ENCODE measurements at regions of chr2 and their contacts with region 1.

Region 1: DNA sequence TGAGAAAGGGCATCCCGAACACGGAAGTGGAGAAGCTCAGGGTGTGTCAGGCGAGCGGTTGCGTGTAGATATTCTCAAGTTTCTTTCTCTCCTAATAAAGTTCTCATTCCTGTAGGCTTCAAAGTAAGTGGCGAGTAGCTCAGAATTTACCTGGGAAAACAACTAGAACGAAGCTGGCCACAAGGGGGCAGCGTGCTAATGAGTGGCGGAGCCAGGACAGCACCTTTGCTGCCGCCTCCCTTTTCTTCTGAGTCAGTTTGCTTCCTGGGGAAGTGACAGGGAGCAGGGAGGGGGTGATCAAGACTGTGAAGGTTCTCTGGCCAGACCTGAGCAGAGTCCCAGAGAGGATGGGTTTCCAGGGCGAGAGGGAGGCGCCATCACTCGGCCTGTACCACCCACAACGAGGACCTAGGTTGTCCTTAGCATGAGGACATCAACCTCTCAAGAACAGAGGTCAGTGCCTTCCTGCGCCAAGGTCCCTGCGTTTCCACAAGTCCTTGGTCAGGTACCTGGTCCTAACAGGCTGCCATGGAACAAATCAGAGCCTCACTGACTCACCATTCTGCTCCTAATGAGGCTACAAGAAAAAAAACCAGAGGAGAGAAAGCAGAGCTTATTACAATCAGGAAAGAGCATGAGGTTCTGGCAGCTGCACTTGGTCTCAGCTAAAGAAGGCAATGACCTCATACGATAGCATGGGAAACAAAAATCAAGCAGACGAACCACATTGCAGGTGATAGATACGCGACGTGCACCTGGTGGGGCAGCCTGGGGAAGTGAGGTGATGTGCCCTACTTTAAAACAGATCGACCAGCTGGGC is 98.6 kb downstream of the PLB1 start:
- DNase-seq: peak; percentile 85

Region 2: DNA sequence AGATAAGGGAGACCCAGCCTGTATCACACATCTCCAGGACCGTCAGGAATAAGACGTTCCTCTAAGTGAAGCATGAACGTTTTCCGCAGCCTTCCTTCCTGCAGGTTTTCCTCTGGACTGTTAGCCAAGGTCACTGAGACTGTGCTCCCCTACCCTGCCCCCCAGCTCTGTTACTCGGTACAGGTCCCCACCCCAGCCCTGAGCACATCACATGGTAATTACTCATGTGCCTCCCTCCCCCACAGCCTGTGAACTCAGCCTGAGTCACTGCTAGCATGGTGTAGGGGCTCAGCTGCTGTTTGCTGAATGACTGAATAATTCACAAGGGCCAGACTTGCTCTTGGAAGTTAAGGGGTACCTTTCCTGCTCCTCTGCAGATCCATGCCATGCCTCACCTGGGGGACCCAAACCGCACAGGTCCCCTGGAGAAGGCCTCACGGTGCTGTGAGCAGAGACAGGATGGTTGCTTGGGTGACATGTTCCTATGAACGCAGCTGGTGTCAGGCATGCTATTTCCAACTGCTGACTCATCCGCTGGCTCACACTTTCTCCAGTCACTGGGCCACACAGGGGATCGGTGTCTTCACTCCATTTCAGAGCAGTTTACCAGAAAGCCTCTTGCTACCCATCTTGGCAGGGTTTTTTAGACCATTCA is 10.5 kb before region 1 on chr2:
- CTCF ChIA-PET with region 1: interaction called, 12 read pairs
- POLR2A ChIA-PET with region 1: interaction called, 3 read pairs
- DNase-seq: peak; percentile 30

Region 3: DNA sequence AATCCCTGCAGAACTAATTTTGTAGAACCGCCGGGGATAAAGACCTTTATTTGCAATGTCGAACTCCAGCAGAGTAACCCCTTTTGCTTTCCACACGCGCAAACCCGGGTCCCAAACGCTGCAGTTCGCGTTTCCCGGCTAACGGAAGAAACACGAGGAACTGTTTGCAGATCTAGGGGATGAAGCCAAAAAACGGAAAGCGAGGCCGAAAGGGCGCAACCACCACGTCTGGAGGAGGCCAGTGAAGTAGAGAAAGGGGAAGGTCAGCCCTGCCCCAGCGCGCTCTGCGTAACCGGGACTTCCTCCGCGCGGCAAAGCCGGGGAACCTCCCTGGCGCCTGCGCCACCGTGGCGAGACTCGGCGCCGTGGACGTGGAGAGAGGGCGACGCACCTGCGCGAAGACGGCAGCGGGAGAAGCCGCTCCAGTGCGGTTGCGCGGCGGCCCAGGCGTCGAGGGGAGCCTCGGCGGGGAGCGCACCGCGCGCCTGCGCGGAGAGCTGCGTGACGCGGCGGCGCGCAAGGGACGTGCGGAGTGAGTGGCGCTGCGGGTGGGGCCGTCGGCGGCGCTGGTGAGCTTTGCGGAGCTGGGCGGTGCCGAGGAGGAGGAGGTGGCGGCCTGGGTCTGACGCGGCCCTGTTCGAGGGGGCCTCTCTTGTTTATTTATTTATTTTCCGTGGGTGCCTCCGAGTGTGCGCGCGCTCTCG is 156.9 kb after region 1 on chr2 and contains the start of gene PPP1CB:
- CTCF ChIA-PET with region 1: interaction called, 6 read pairs
- POLR2A ChIA-PET with region 1: interaction called, 16 read pairs
- DNase-seq: peak; percentile 92